GM12878 (cell line): ENCODE measurements at regions of chr21 and their contacts with region 1.

Region 1: DNA sequence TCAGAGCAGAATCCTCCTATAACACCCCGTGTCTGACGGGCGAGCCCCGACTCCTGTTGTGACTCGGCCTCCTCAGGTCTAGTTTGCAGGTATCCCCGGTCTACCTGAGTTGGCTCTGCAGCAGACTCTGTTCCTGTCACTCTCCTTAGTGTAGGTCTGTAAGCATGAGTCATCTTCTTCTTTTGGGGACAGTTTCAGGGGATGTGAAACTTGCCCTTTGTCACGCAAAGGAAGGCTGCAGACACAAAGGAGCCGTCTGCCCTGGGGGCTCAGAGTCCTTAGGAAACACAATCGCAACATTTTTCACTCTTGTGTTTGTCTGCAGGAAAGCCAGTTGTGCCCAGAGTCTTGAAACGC is 183.2 kb downstream of the RUNX1 start:
- DNase-seq: peak; percentile 74
- ATAC-seq: peak; percentile 93
- H3K4me3 ChIP-seq: no peak overlapping the region; the same call in 1 of the 2 replicates
- H3K27ac ChIP-seq: peak overlapping the region; percentile 76
- H3K4me1 ChIP-seq: peaks cover 29% of the 10 kb centered on the region
- H3K27me3 ChIP-seq: no peaks in the 10 kb centered on the region; a peak in 1 of 4 replicates
- CTCF ChIP-seq: no peak
- EP300 ChIP-seq: peak; percentile 76 to 97; a peak in 3 of 4 replicates
- POLR2A ChIP-seq: no peak
- RAD21 ChIP-seq: no peak; the same call in 1 of the 2 replicates

Region 2: DNA sequence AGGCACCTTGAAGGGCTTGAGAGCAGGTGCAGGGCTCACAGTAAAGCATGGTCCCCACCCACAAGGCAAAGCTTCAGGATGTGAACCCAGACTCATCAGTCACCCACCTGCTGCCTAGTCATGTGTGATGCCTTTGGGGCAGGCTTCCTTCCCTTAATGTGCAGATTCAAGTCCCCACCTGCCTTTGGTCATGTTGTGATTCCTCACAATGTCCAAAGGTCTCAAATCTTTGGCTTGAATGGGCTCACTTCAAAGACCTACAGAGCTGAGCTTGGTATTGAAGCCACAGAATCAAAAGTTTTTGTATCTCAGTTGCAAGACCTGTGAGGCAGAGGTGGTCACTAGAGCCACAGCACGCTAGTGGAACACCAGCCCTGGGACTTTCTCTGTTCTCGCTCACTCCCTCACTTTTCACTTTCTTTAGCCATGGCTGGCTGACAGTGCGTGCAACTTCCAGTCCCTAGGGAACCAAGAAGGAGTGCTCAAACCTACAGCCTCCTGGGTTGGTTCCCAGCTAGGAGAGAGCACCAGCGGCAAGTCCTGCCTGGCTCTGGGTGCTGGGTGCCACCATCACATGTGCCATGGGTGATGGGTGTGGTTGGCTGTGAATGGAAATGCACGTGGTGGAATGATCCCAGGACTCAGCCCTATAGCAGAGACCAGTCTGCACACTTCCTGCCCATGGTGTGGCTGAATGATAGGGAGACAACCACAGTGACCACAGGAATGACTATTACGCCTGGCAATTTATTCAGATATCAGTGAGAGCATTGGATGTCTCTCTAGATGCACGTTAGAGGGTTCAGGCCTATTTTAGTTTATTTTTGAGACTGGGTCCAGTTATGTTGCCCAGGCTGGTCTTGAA is 223.5 kb before region 1 on chr21:
- CTCF ChIA-PET with region 1: no interaction called
- POLR2A ChIA-PET with region 1: no interaction called
- RAD21 ChIA-PET with region 1: no interaction called
- SMC1A ChIA-PET with region 1: no interaction called
- in situ Hi-C with region 1: no loop called
- intact Hi-C with region 1: loop called (anchors 5 kb)
- DNase-seq: peak; percentile 87
- ATAC-seq: peak; percentile 77
- H3K4me3 ChIP-seq: 0 out of 2 replicates have a peak overlapping the region, but pooled peaks have one; percentile 6
- H3K27ac ChIP-seq: peak overlapping the region; percentile 97
- H3K4me1 ChIP-seq: peaks cover 60% of the 10 kb centered on the region
- H3K27me3 ChIP-seq: no peaks in the 10 kb centered on the region
- CTCF ChIP-seq: no peak
- EP300 ChIP-seq: peak in 1 of 2 experiments; percentile 65; a peak in 2 of 4 replicates
- POLR2A ChIP-seq: no peak; the same call in 1 of the 2 replicates
- RAD21 ChIP-seq: no peak

Region 3: DNA sequence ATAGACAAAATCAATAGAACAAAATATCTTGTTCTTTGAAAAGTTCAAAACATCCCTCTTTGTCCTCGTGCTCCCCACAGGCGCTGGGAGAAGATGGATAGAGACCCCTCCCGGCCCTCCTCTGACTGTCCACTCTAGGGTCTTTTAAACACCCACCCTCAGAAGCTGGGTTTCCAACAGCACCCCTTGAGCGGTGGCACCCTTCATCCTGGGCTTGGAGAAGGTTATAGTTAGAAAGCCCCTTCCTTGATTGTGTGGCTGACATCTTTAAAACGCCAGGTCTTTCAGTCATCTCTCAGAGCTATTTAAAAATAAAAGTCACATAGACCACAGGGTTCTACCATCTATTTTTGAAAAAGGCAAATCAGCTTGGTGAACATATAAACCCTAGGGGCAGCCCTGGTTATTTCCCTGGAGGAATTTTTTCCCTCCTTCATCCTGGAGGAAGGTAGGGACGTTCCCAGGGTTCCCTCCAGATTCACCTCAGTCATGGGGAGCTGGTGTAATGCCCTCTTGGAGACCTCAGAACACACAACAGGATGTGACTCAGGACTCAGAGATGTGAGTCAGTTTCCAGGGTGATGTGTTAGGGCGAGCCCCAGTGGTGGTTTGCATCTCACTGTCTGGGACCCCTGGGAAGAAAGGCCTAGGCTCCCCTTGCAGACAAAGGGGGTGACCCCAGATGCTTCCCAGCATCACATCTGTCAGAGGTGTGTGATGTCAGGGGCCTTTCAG is 58.6 kb before region 1 on chr21:
- CTCF ChIA-PET with region 1: interaction called, 3 read pairs
- POLR2A ChIA-PET with region 1: no interaction called
- RAD21 ChIA-PET with region 1: no interaction called
- SMC1A ChIA-PET with region 1: no interaction called
- in situ Hi-C with region 1: no loop called
- intact Hi-C with region 1: loop called (anchors 5 kb)
- DNase-seq: no peak
- ATAC-seq: peak; percentile 85
- H3K4me3 ChIP-seq: no peak overlapping the region
- H3K27ac ChIP-seq: no peak overlapping the region
- H3K4me1 ChIP-seq: peaks cover 24% of the 10 kb centered on the region
- H3K27me3 ChIP-seq: no peaks in the 10 kb centered on the region
- CTCF ChIP-seq: no peak
- EP300 ChIP-seq: no peak
- POLR2A ChIP-seq: no peak
- RAD21 ChIP-seq: 0 out of 2 replicates have a peak, but pooled peaks have one; percentile 3

Region 4: GRCh38 chr21:34835541-34835969 is 30.4 kb before region 1 on chr21:
- CTCF ChIA-PET with region 1: no interaction called
- POLR2A ChIA-PET with region 1: no interaction called
- RAD21 ChIA-PET with region 1: no interaction called
- SMC1A ChIA-PET with region 1: no interaction called
- in situ Hi-C with region 1: no loop called
- intact Hi-C with region 1: no loop called
- DNase-seq: no peak
- ATAC-seq: no peak
- H3K4me3 ChIP-seq: no peak overlapping the region
- H3K27ac ChIP-seq: no peak overlapping the region
- H3K4me1 ChIP-seq: peaks cover 3% of the 10 kb centered on the region; the same call in 1 of the 2 replicates
- H3K27me3 ChIP-seq: no peaks in the 10 kb centered on the region
- CTCF ChIP-seq: no peak
- EP300 ChIP-seq: no peak
- POLR2A ChIP-seq: no peak
- RAD21 ChIP-seq: no peak

Region 5: GRCh38 chr21:34845521-34846451 is 20.1 kb before region 1 on chr21:
- CTCF ChIA-PET with region 1: no interaction called
- POLR2A ChIA-PET with region 1: no interaction called
- RAD21 ChIA-PET with region 1: interaction called, 3 read pairs
- SMC1A ChIA-PET with region 1: interaction called, 4 read pairs
- in situ Hi-C with region 1: no loop called
- intact Hi-C with region 1: loop called (anchors 1 kb)
- DNase-seq: peak; percentile 60
- ATAC-seq: peak; percentile 91
- H3K4me3 ChIP-seq: no peak overlapping the region
- H3K27ac ChIP-seq: no peak overlapping the region
- H3K4me1 ChIP-seq: peaks cover 32% of the 10 kb centered on the region
- H3K27me3 ChIP-seq: no peaks in the 10 kb centered on the region
- CTCF ChIP-seq: no peak
- EP300 ChIP-seq: peak; percentile 82 to 89
- POLR2A ChIP-seq: no peak
- RAD21 ChIP-seq: no peak

Region 6: DNA sequence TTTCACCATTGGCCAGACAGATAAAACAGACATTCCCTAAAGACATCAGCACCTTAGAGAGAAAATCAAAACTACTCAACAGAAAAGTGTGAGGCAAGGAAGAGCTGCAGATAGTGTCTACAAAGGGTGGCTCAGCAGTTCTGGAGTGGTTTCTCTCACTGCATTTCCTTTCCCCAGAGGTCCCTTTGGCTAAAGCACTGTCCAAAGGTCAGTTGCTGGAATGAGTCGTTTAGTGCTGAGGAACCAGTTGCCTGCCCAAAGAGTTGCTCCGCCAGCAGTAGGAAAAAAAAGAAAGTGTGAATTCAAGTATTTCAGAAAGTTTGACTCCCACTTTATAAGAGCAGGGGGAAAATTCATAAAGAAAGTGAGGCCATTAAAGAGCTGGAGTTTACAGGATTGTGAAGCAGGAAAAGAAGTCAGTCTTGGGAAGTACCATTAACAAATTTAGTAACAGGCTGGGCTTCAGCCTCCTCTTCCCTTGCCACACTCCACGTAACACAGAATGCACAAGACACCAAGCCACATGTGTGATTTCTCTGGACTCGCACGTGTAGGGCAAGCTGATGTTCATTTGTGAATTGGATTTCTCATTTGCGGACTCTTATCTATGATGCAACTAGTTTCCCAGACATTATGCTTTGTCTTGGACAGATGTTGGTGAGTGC is 61.0 kb after region 1 on chr21:
- CTCF ChIA-PET with region 1: no interaction called
- POLR2A ChIA-PET with region 1: no interaction called
- RAD21 ChIA-PET with region 1: no interaction called
- SMC1A ChIA-PET with region 1: no interaction called
- in situ Hi-C with region 1: loop called (anchors 10 kb)
- intact Hi-C with region 1: no loop called
- DNase-seq: no peak
- ATAC-seq: no peak
- H3K4me3 ChIP-seq: no peak overlapping the region
- H3K27ac ChIP-seq: no peak overlapping the region
- H3K4me1 ChIP-seq: no peaks in the 10 kb centered on the region
- H3K27me3 ChIP-seq: peaks cover 0 to 2% of the 10 kb centered on the region in 2 experiments; a peak in 2 of 4 replicates
- CTCF ChIP-seq: no peak
- EP300 ChIP-seq: no peak
- POLR2A ChIP-seq: no peak
- RAD21 ChIP-seq: no peak